ENCODE measurements at regions of chr3 and their contacts with region 1.

Region 1: DNA sequence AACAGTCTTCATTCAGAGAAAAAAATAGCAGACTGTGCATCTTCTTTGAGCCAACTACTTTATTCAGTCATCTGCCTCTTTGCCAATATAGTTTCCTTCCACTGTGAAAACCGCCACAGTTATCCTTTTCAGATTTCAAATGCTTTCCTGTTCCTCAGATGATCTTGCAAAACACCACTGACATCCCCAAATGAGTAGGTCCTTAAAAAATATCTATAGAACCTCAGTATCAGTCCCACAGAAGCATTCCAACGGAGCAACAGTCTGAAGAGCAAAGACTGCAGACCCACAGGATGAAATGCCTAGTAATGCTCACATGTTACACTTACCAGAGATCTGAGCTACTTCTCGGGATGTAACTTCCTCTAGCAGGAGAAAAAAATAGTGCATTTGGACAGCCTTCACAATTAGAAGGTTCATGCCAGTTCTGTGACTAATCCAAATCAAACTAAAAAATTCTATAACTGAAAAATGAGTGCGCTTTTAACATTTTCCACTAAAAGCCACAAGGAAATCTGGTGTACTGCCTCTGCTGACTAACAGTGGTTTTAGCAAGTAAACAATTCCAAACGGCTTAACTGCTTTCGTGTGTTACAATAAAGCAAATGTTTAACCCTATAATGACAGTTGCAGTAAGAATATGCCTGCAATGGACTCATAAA is at the start of gene ANKRD28:
- DNase-seq: no peak
- ATAC-seq: peak; percentile 32
- H3K4me3 ChIP-seq: peak within 1 kb of the TSS; percentile 73
- H3K27ac ChIP-seq: peak within 1 kb of the TSS; percentile 94
- H3K4me1 ChIP-seq: peaks cover 27% of the 10 kb centered on the region; the same call in 1 of the 2 replicates
- H3K27me3 ChIP-seq: no peaks in the 10 kb centered on the region
- CTCF ChIP-seq: peak; percentile 7 to 25 (median 14); a peak in 1 of 6 replicates
- EP300 ChIP-seq: peak in 1 of 2 experiments; percentile 64; a peak in 1 of 4 replicates
- POLR2A ChIP-seq: 0 out of 2 replicates have a peak, but pooled peaks have one; percentile 32
- RAD21 ChIP-seq: no peak
- polyA plus RNA-seq, gene ANKRD28: 12.3 to 13.7 TPM

Region 2: DNA sequence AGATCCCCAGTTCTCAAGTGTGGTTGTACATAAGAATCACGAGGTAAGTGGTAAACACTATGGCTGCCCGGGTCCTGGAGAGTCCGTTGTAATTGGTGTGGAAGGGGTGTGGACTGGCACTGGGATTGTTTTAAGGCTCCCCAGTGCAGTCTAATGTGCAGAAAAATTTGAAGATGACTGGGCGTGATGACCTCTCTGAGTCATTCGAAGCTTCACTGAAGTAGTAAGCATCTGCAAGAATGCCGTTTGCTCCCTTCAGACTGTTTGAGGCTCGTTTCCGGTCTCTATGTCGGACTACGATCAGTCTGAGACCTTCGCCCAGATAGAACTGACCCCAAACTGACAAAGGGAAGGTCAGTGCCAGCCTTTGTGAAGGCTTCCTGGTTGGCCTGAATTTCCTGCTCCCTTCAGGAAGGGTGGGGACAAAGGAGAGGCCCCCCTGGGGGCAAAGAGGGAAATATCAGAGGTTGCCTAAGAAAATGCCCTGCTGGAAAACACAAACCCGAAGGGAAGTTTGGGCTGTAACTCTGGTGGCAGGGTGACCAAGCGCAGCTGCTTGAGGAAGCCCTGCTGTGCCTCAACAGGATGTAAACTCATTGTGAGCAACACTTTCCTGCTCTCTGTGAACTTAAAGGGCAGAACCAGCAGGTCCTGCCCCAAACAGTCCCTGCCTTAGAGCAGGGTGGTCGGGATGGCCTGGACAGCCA is 161.6 kb before region 1 on chr3:
- CTCF ChIA-PET with region 1: interaction called, 11 read pairs
- POLR2A ChIA-PET with region 1: interaction called, 12 read pairs
- RAD21 ChIA-PET with region 1: interaction called, 60 read pairs
- SMC1A ChIA-PET with region 1: interaction called, 31 read pairs
- in situ Hi-C with region 1: no loop called
- intact Hi-C with region 1: no loop called
- DNase-seq: no peak
- ATAC-seq: peak; percentile 39
- H3K4me3 ChIP-seq: no peak overlapping the region
- H3K27ac ChIP-seq: peak overlapping the region; percentile 74
- H3K4me1 ChIP-seq: peaks cover 38% of the 10 kb centered on the region
- H3K27me3 ChIP-seq: no peaks in the 10 kb centered on the region
- CTCF ChIP-seq: no peak
- EP300 ChIP-seq: no peak
- POLR2A ChIP-seq: no peak
- RAD21 ChIP-seq: no peak

Region 3: GRCh38 chr3:15713364-15713763 is 84.4 kb before region 1 on chr3:
- CTCF ChIA-PET with region 1: interaction called, 4 read pairs
- POLR2A ChIA-PET with region 1: no interaction called
- RAD21 ChIA-PET with region 1: interaction called, 29 read pairs
- SMC1A ChIA-PET with region 1: interaction called, 16 read pairs
- in situ Hi-C with region 1: no loop called
- intact Hi-C with region 1: no loop called
- DNase-seq: no peak
- ATAC-seq: peak; percentile 81
- H3K4me3 ChIP-seq: no peak overlapping the region
- H3K27ac ChIP-seq: no peak overlapping the region
- H3K4me1 ChIP-seq: no peaks in the 10 kb centered on the region; the same call in 1 of the 2 replicates
- H3K27me3 ChIP-seq: no peaks in the 10 kb centered on the region
- CTCF ChIP-seq: no peak
- EP300 ChIP-seq: no peak
- POLR2A ChIP-seq: no peak
- RAD21 ChIP-seq: no peak

Region 4: DNA sequence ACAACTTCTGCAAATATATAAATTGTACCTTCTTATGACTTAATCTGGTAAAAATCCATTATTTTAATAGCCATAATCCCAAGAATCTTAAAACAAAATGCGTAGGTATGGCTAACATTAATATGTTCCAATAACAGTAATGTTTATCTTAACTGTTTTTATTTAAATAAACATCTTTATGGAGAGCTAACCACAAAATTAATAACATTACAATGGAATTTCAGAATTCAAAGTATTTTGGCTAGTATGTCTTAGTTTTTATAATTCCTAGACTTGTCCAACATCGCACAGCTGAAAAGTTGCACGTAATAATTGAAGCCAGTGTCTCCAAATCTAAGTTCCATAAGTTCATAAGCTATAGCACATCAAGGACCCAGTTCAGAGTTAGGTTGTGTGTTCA is 47.6 kb before region 1 on chr3:
- CTCF ChIA-PET with region 1: interaction called, 4 read pairs
- POLR2A ChIA-PET with region 1: interaction called, 6 read pairs
- RAD21 ChIA-PET with region 1: interaction called, 4 read pairs
- SMC1A ChIA-PET with region 1: interaction called, 10 read pairs
- in situ Hi-C with region 1: no loop called
- intact Hi-C with region 1: no loop called
- DNase-seq: no peak
- ATAC-seq: no peak
- H3K4me3 ChIP-seq: no peak overlapping the region
- H3K27ac ChIP-seq: no peak overlapping the region
- H3K4me1 ChIP-seq: peaks cover 13% of the 10 kb centered on the region
- H3K27me3 ChIP-seq: no peaks in the 10 kb centered on the region
- CTCF ChIP-seq: no peak
- EP300 ChIP-seq: no peak
- POLR2A ChIP-seq: no peak
- RAD21 ChIP-seq: no peak

Region 5: DNA sequence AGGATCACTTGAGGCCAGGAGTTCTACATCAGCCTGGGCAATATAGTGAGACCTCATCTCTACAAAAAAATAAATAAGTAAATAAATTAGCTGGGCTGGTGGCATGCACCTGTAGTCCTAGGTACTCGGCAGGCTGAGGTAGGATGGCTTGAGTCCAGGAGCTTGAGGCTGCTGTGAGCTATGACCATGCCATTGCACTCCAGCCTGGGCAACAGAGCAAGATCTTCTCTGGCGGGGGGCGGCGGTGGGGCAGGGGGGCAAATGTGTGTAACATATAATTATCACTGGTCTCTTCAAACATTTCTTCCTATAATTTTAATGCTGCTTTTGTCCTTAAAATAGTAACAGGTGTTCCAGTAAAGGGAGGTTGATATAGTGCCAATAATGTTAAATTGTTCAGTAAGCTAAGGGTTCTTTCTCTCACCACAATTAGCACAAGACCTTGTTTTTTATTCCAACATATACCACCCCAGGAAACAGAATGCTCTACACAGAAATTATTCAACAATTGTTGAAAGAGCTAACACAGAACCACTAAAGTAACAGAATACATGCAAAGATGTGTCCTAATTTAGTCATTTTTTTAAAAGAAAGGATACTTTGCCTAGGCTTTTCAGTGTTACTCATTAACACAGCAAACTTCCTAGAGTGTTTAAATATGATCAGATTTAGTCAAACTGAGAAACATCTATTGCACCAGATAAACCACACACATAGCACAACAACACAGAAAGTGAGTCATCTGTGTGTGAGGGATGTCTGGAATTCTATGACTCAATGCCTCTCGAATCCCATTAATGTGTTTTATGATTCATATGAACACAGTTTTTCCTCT is 29.1 kb before region 1 on chr3:
- CTCF ChIA-PET with region 1: interaction called, 9 read pairs
- POLR2A ChIA-PET with region 1: interaction called, 6 read pairs
- RAD21 ChIA-PET with region 1: interaction called, 28 read pairs
- SMC1A ChIA-PET with region 1: interaction called, 40 read pairs
- in situ Hi-C with region 1: no loop called
- intact Hi-C with region 1: loop called (anchors 1 kb)
- DNase-seq: peak; percentile 65
- ATAC-seq: peak; percentile 82
- H3K4me3 ChIP-seq: peak overlapping the region; percentile 21; the same call in 1 of the 2 replicates
- H3K27ac ChIP-seq: peak overlapping the region; percentile 45
- H3K4me1 ChIP-seq: peaks cover 23% of the 10 kb centered on the region
- H3K27me3 ChIP-seq: no peaks in the 10 kb centered on the region
- CTCF ChIP-seq: no peak
- EP300 ChIP-seq: peak; percentile 81 to 82; a peak in 3 of 4 replicates
- POLR2A ChIP-seq: no peak
- RAD21 ChIP-seq: no peak

Region 6: GRCh38 chr3:15781637-15782402 is 16.0 kb before region 1 on chr3:
- CTCF ChIA-PET with region 1: interaction called, 6 read pairs
- POLR2A ChIA-PET with region 1: interaction called, 9 read pairs
- RAD21 ChIA-PET with region 1: interaction called, 18 read pairs
- SMC1A ChIA-PET with region 1: interaction called, 25 read pairs
- in situ Hi-C with region 1: no loop called
- intact Hi-C with region 1: no loop called
- DNase-seq: no peak
- ATAC-seq: no peak
- H3K4me3 ChIP-seq: no peak overlapping the region
- H3K27ac ChIP-seq: no peak overlapping the region
- H3K4me1 ChIP-seq: no peaks in the 10 kb centered on the region
- H3K27me3 ChIP-seq: no peaks in the 10 kb centered on the region
- CTCF ChIP-seq: no peak
- EP300 ChIP-seq: no peak
- POLR2A ChIP-seq: no peak
- RAD21 ChIP-seq: no peak

Region 7: GRCh38 chr3:15787526-15787925 is 10.2 kb before region 1 on chr3:
- CTCF ChIA-PET with region 1: interaction called, 6 read pairs
- POLR2A ChIA-PET with region 1: interaction called, 7 read pairs
- RAD21 ChIA-PET with region 1: interaction called, 13 read pairs
- SMC1A ChIA-PET with region 1: interaction called, 7 read pairs
- in situ Hi-C with region 1: no loop called
- intact Hi-C with region 1: no loop called
- DNase-seq: no peak
- ATAC-seq: peak; percentile 26
- H3K4me3 ChIP-seq: no peak overlapping the region
- H3K27ac ChIP-seq: no peak overlapping the region
- H3K4me1 ChIP-seq: no peaks in the 10 kb centered on the region
- H3K27me3 ChIP-seq: no peaks in the 10 kb centered on the region
- CTCF ChIP-seq: no peak
- EP300 ChIP-seq: no peak
- POLR2A ChIP-seq: no peak
- RAD21 ChIP-seq: no peak

Measured in GM12878 (cell line).